Posterior cingulate gyrus (tissue), 11 donors: ENCODE measurements at regions of chr15 and their contacts with region 1.

Region 1: GRCh38 chr15:36579792-36580431 is 486 bp downstream of the CDIN1 start:
- DNase-seq: peak in 9 of 10 donors; percentile 13 to 91 (median 36)

Region 2: DNA sequence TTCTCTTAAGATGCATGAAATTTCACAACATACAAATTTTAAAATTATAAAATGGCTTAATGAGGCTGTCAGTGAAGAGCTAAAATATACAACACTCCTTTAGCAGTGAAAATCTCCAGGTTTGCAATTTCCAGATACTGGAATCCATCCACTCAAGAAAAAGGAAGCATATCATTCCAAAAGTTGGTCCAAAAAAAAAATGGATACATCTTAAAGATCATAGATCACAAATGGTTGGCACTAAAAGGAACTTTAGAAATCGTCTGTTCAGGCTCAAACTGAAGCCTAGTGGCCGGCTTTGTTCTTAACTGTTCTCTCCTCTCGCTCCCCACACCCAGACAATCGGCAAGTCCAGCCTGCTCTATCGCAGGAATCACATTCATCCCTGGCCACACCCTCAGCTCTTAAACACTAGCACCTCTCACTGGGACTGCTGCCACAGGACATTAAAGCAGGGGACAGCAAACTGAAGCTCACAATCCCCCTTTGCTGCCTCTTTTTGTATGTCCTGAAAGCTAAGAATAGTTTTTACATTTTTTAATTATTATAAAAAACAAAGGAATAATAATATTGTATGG is 130.7 kb before region 1 on chr15:
- intact Hi-C with region 1: no loop called
- DNase-seq: no peak

Region 3: DNA sequence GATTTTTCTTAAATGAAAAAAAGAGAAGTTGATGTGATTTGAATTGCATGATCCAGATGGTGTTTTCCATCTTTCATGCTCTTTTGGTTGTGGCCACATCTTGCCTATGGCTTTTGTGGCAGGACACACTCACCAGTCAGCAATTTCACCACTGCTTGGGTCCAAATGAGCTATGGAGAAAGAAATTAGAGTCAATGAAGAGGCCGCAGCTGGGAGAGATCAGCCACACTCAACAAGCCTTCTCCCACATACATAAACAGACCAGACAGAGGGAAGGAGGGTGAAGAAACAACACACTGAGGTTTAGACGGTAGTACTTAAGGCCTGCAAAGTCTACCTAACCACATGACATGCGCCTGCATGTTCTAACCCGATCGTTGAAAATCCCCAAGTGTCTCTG is 111.2 kb before region 1 on chr15:
- intact Hi-C with region 1: no loop called
- DNase-seq: no peak

Region 4: GRCh38 chr15:37100109-37100965 is 520.4 kb after region 1 on chr15 and contains the start of gene MEIS2:
- intact Hi-C with region 1: loop called (anchors 10 kb)
- DNase-seq: peak; percentile 77 to 98 (median 88)